CD4-positive, alpha-beta memory T cell (primary cell): ENCODE measurements at regions of chr1 and their contacts with region 1.

Region 1: GRCh38 chr1:155859234-155859829 is at the start of gene SYT11:
- DNase-seq: peak; percentile 88 to 94 (median 91)
- H3K4me3 ChIP-seq: peak within 1 kb of the TSS; percentile 36 to 68
- H3K4me3 Mint-ChIP-seq: peak within 1 kb of the TSS; percentile 88 to 99 (median 90)
- H3K27ac ChIP-seq: peak within 1 kb of the TSS; percentile 73
- H3K27ac Mint-ChIP-seq: peak within 1 kb of the TSS; percentile 88 to 100 (median 96)
- H3K4me1 ChIP-seq: peaks cover 48% of the 10 kb centered on the region
- H3K4me1 Mint-ChIP-seq: peaks cover 18 to 53% (median 33%) of the 10 kb centered on the region in 4 donors
- H3K27me3 ChIP-seq: no peaks in the 10 kb centered on the region
- H3K27me3 Mint-ChIP-seq: no peaks in the 10 kb centered on the region
- total RNA-seq, gene SYT11: 17.7 to 18.2 TPM

Region 2: GRCh38 chr1:155776404-155776803 is 82.9 kb before region 1 on chr1:
- CTCF ChIA-PET with region 1: no interaction called
- POLR2A ChIA-PET with region 1: no interaction called
- intact Hi-C with region 1: no loop called
- DNase-seq: no peak
- H3K4me3 ChIP-seq: no peak overlapping the region
- H3K4me3 Mint-ChIP-seq: no peak overlapping the region
- H3K27ac ChIP-seq: no peak overlapping the region
- H3K27ac Mint-ChIP-seq: peak overlapping the region in 6 of 7 donors; percentile 12 to 86 (median 62)
- H3K4me1 ChIP-seq: no peaks in the 10 kb centered on the region
- H3K4me1 Mint-ChIP-seq: peaks cover 0 to 14% (median 2%) of the 10 kb centered on the region in 4 donors
- H3K27me3 ChIP-seq: no peaks in the 10 kb centered on the region
- H3K27me3 Mint-ChIP-seq: no peaks in the 10 kb centered on the region

Region 3: GRCh38 chr1:155834296-155834926 is 24.9 kb before region 1 on chr1:
- CTCF ChIA-PET with region 1: no interaction called
- POLR2A ChIA-PET with region 1: no interaction called
- intact Hi-C with region 1: no loop called
- DNase-seq: no peak
- H3K4me3 ChIP-seq: no peak overlapping the region
- H3K4me3 Mint-ChIP-seq: no peak overlapping the region
- H3K27ac ChIP-seq: no peak overlapping the region
- H3K27ac Mint-ChIP-seq: peak overlapping the region in 3 of 7 donors; percentile 31 to 65 (median 54)
- H3K4me1 ChIP-seq: peaks cover 6% of the 10 kb centered on the region
- H3K4me1 Mint-ChIP-seq: peaks cover 20 to 32% (median 27%) of the 10 kb centered on the region in 4 donors
- H3K27me3 ChIP-seq: no peaks in the 10 kb centered on the region
- H3K27me3 Mint-ChIP-seq: no peaks in the 10 kb centered on the region

Region 4: GRCh38 chr1:155911156-155912055 is 52.1 kb after region 1 on chr1 and contains the start of gene RIT1:
- CTCF ChIA-PET with region 1: no interaction called
- POLR2A ChIA-PET with region 1: no interaction called
- intact Hi-C with region 1: loop called (anchors 1 kb)
- DNase-seq: peak; percentile 78 to 87 (median 80)
- H3K4me3 ChIP-seq: peak within 1 kb of the TSS; percentile 85 to 86
- H3K4me3 Mint-ChIP-seq: peak within 1 kb of the TSS; percentile 92 to 99 (median 98)
- H3K27ac ChIP-seq: peak within 1 kb of the TSS; percentile 79
- H3K27ac Mint-ChIP-seq: peak within 1 kb of the TSS; percentile 86 to 99 (median 98)
- H3K4me1 ChIP-seq: peaks cover 21% of the 10 kb centered on the region
- H3K4me1 Mint-ChIP-seq: peaks cover 16 to 28% (median 21%) of the 10 kb centered on the region in 4 donors
- H3K27me3 ChIP-seq: no peaks in the 10 kb centered on the region
- H3K27me3 Mint-ChIP-seq: no peaks in the 10 kb centered on the region
- total RNA-seq, gene RIT1: 45.0 to 48.0 TPM